ENCODE measurements at regions of chr16 and their contacts with region 1.

Region 1: GRCh38 chr16:79601931-79602627 is 1.5 kb upstream of the MAF start:
- DNase-seq: peak; percentile 63 to 87 (median 81)
- ATAC-seq: no peak
- H3K4me3 ChIP-seq: peak overlapping the region; percentile 62 to 83
- H3K4me3 Mint-ChIP-seq: peak overlapping the region; percentile 91
- H3K27ac ChIP-seq: peak overlapping the region in 1 of 2 experiments; percentile 17
- H3K27ac Mint-ChIP-seq: peak overlapping the region; percentile 42
- H3K4me1 ChIP-seq: peaks cover 12% of the 10 kb centered on the region
- H3K4me1 Mint-ChIP-seq: peaks cover 26% of the 10 kb centered on the region
- H3K27me3 ChIP-seq: peaks cover 0 to 13% of the 10 kb centered on the region in 2 experiments
- H3K27me3 Mint-ChIP-seq: peaks cover 35% of the 10 kb centered on the region
- CTCF ChIP-seq: peak; percentile 92

Region 2: GRCh38 chr16:78503602-78504001 is 1098.5 kb before region 1 on chr16:
- CTCF ChIA-PET with region 1: interaction called, 6 read pairs
- POLR2A ChIA-PET with region 1: no interaction called
- intact Hi-C with region 1: loop called in 1 of 2 experiments (anchors 2 kb)
- DNase-seq: peak in 5 of 9 experiments; percentile 16 to 65 (median 38)
- ATAC-seq: no peak
- H3K4me3 ChIP-seq: no peak overlapping the region
- H3K4me3 Mint-ChIP-seq: no peak overlapping the region
- H3K27ac ChIP-seq: no peak overlapping the region
- H3K27ac Mint-ChIP-seq: no peak overlapping the region
- H3K4me1 ChIP-seq: no peaks in the 10 kb centered on the region
- H3K4me1 Mint-ChIP-seq: no peaks in the 10 kb centered on the region
- H3K27me3 ChIP-seq: no peaks in the 10 kb centered on the region
- H3K27me3 Mint-ChIP-seq: no peaks in the 10 kb centered on the region
- CTCF ChIP-seq: peak; percentile 78

Region 3: DNA sequence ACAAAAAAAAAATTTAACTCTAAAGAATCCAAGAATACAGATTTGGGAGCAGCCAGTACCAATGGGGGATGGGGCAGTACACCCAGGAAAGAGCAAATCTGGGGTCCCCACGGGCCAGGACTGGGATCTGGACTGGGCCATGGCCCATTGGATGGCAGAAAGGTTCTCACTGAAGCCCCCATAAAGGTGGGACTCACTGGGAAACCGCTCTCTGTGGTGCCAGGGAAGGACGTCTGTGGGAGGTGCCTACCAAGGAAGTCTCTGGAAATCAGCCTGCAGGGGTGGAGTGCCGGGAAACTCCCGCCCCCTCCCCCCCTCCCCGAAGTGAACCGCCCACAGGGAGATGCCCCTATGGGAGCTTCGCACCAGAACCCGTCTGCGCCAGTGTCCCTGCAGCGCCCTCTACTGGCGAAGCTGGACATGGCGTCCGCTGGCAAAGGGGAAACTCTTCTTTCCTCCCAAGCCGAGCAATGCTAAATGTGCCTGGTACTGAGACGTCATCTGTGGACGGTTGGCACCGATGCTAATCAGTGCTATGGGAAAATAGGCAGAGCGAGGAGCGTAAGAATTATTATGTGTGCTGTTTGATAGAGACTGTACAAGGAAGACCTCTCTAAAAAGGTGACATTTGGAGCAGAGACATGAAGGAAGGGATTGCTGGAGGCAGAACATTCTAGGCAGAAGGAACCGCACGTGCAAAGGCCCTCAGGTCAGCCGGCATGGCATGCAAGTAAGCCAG is 831.6 kb before region 1 on chr16:
- CTCF ChIA-PET with region 1: interaction called, 6 read pairs
- POLR2A ChIA-PET with region 1: no interaction called
- intact Hi-C with region 1: loop called (anchors 10 kb)
- DNase-seq: peak; percentile 66 to 87 (median 78)
- ATAC-seq: peak; percentile 78
- H3K4me3 ChIP-seq: no peak overlapping the region
- H3K4me3 Mint-ChIP-seq: no peak overlapping the region
- H3K27ac ChIP-seq: peak overlapping the region in 1 of 2 experiments; percentile 12
- H3K27ac Mint-ChIP-seq: peak overlapping the region; percentile 66
- H3K4me1 ChIP-seq: peaks cover 5% of the 10 kb centered on the region
- H3K4me1 Mint-ChIP-seq: peaks cover 16% of the 10 kb centered on the region
- H3K27me3 ChIP-seq: no peaks in the 10 kb centered on the region
- H3K27me3 Mint-ChIP-seq: peaks cover 3% of the 10 kb centered on the region
- CTCF ChIP-seq: peak; percentile 95

Region 4: GRCh38 chr16:79132701-79133100 is 469.4 kb before region 1 on chr16:
- CTCF ChIA-PET with region 1: no interaction called
- POLR2A ChIA-PET with region 1: no interaction called
- intact Hi-C with region 1: loop called in 1 of 2 experiments (anchors 10 kb)
- DNase-seq: no peak
- ATAC-seq: no peak
- H3K4me3 ChIP-seq: no peak overlapping the region
- H3K4me3 Mint-ChIP-seq: no peak overlapping the region
- H3K27ac ChIP-seq: no peak overlapping the region
- H3K27ac Mint-ChIP-seq: no peak overlapping the region
- H3K4me1 ChIP-seq: no peaks in the 10 kb centered on the region
- H3K4me1 Mint-ChIP-seq: no peaks in the 10 kb centered on the region
- H3K27me3 ChIP-seq: no peaks in the 10 kb centered on the region
- H3K27me3 Mint-ChIP-seq: no peaks in the 10 kb centered on the region
- CTCF ChIP-seq: no peak

Region 5: DNA sequence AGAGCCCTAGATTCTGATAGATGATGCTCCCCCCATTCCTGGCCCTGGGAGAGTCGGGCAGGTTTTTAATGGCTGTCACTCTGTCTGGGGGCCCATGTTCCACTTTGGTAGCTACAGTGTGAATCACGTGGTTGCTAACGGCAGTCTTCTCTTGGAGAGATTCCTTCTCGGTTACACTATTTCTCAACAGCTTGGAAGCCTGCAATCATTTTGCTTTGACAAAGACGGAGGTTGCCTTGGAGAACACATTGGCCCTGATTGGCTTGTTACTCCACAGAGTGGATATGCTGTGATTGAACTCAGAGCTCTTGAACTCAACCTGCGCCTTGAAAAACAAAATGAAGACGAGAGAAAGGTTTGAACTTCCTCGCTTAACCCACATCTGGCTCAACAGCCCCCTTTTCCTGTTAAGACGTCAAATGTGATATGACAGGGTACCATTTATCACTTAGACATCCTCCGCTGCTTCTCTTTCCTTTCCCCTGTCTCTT is 220.5 kb before region 1 on chr16:
- CTCF ChIA-PET with region 1: no interaction called
- POLR2A ChIA-PET with region 1: interaction called, 4 read pairs
- intact Hi-C with region 1: loop called in 1 of 2 experiments (anchors 5 kb)
- DNase-seq: peak in 4 of 9 experiments; percentile 13 to 77 (median 42)
- ATAC-seq: peak; percentile 64
- H3K4me3 ChIP-seq: peak overlapping the region; percentile 18 to 29
- H3K4me3 Mint-ChIP-seq: peak overlapping the region; percentile 58
- H3K27ac ChIP-seq: peak overlapping the region; percentile 44 to 87
- H3K27ac Mint-ChIP-seq: peak overlapping the region; percentile 87
- H3K4me1 ChIP-seq: peaks cover 16% of the 10 kb centered on the region
- H3K4me1 Mint-ChIP-seq: peaks cover 26% of the 10 kb centered on the region
- H3K27me3 ChIP-seq: no peaks in the 10 kb centered on the region
- H3K27me3 Mint-ChIP-seq: peaks cover 6% of the 10 kb centered on the region
- CTCF ChIP-seq: no peak

Region 6: DNA sequence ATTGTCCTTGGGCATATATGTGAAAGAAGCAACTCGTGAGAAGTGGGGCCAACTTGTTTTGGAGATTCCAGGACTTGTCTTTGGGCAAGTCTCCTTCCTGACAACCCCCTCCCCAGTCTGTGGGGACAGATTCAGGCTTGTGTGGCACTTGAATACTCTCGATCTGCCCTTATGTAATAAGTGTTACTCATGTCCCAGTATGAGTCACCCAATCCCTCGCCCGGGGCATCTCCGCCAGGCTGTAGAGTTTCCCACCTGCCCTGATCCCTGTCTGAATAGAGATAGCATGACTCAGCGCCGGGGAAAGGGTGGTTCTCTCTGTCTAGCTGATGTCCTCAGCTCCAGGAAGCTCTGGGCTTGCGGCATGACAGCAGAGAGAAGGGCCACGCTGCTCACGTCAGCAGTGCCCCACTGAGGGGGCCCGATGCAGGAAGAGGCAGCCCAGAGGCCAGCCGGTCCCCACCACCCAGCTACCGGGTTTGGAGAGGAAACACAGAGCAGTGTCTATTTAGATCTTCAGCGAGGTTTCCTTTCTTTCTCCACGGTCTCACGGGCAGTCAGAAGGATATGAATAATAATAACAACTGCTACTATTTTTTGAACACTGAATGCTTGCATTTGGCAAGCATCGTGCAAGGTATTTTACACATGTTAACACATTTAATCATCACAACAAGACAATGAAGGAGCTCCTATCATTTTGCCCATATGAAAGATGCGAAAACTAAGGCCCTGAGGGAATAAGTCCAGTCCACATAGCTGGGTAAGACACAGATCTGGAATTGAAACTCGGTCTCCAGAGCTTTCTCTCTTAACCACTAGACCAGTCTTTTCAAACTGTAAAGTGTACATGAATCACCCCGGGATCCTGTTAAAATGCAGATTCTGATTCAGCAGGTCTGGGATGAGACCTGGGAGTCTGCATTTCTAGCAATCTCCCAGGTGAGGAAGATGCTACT is 425.2 kb after region 1 on chr16:
- CTCF ChIA-PET with region 1: no interaction called
- POLR2A ChIA-PET with region 1: no interaction called
- intact Hi-C with region 1: no loop called
- DNase-seq: peak in 8 of 9 experiments; percentile 3 to 68 (median 47)
- ATAC-seq: peak; percentile 73
- H3K4me3 ChIP-seq: peak overlapping the region in 1 of 2 experiments; percentile 16
- H3K4me3 Mint-ChIP-seq: peak overlapping the region; percentile 51
- H3K27ac ChIP-seq: no peak overlapping the region
- H3K27ac Mint-ChIP-seq: peak overlapping the region; percentile 39
- H3K4me1 ChIP-seq: peaks cover 6% of the 10 kb centered on the region
- H3K4me1 Mint-ChIP-seq: peaks cover 12% of the 10 kb centered on the region
- H3K27me3 ChIP-seq: no peaks in the 10 kb centered on the region
- H3K27me3 Mint-ChIP-seq: peaks cover 2% of the 10 kb centered on the region
- CTCF ChIP-seq: no peak

Measured in CD8-positive, alpha-beta T cell (primary cell).